ENCODE measurements at regions of chr20 and their contacts with region 1.

Region 1: GRCh38 chr20:35954200-35954906 is at the start of gene SCAND1:
- DNase-seq: peak; percentile 100
- H3K4me3 ChIP-seq: peak within 1 kb of the TSS; percentile 86
- H3K4me3 Mint-ChIP-seq: peak within 1 kb of the TSS; percentile 88
- H3K27ac Mint-ChIP-seq: peak within 1 kb of the TSS; percentile 96
- H3K4me1 ChIP-seq: peaks cover 22% of the 10 kb centered on the region
- H3K4me1 Mint-ChIP-seq: peaks cover 9% of the 10 kb centered on the region
- H3K27me3 ChIP-seq: no peaks in the 10 kb centered on the region
- H3K27me3 Mint-ChIP-seq: no peaks in the 10 kb centered on the region
- CTCF ChIP-seq: peak; percentile 99 to 100
- total RNA-seq, gene SCAND1: 125 and 129 TPM in 2 replicates

Region 2: GRCh38 chr20:35454881-35455609 is 499.3 kb before region 1 on chr20 and contains the start of gene CEP250:
- CTCF ChIA-PET with region 1: interaction called, 8 read pairs
- POLR2A ChIA-PET with region 1: interaction called, 27 read pairs
- intact Hi-C with region 1: loop called (anchors 10 kb)
- DNase-seq: peak; percentile 100
- H3K4me3 ChIP-seq: peak within 1 kb of the TSS; percentile 50
- H3K4me3 Mint-ChIP-seq: peak within 1 kb of the TSS; percentile 93
- H3K27ac Mint-ChIP-seq: peak within 1 kb of the TSS; percentile 100
- H3K4me1 ChIP-seq: peaks cover 5% of the 10 kb centered on the region
- H3K4me1 Mint-ChIP-seq: peaks cover 29% of the 10 kb centered on the region
- H3K27me3 ChIP-seq: no peaks in the 10 kb centered on the region
- H3K27me3 Mint-ChIP-seq: no peaks in the 10 kb centered on the region
- CTCF ChIP-seq: no peak
- total RNA-seq, gene CEP250: 117 and 137 TPM in 2 replicates

Region 3: DNA sequence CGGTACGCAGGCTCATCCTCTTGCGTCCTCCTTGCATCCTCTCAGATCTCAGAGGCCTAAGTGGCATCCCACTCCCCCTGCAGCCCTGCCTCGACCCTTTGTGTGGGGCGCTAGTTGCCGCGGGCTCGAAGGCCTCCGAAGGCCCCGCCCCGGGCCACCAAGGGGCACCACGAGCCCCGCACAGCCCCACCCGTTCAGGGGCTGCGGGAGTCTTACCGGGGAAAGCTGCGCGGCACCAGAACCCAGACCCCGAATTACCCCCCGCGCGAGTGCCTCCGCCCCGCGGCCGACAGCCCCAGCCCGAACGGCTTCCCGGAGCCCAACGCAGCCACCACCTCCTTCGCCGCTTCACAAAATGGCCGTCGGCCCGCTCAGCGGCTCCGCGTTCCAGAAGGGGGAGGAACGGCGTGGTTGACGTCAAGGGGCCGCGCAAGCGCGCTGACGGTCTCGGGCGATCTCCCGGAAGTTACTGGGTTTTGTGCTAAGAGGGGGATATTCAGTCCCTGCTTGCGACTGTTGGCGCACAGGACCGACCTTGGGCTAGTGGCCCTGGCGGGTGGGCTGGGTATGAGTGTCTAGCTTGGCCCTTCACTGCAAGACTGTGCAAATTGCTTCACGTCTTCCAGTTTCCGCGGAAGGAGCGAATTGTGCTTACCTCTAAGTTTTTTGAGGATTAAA is 289.7 kb before region 1 on chr20 and contains the starts of genes CPNE1 and RBM12:
- CTCF ChIA-PET with region 1: interaction called, 5 read pairs
- POLR2A ChIA-PET with region 1: interaction called, 13 read pairs
- intact Hi-C with region 1: no loop called
- DNase-seq: peak; percentile 99
- H3K4me3 ChIP-seq: peak within 1 kb of the TSS; percentile 87
- H3K4me3 Mint-ChIP-seq: peak within 1 kb of the TSS; percentile 84
- H3K27ac Mint-ChIP-seq: peak within 1 kb of the TSS; percentile 96
- H3K4me1 ChIP-seq: peaks cover 30% of the 10 kb centered on the region
- H3K4me1 Mint-ChIP-seq: peaks cover 22% of the 10 kb centered on the region
- H3K27me3 ChIP-seq: no peaks in the 10 kb centered on the region
- H3K27me3 Mint-ChIP-seq: no peaks in the 10 kb centered on the region
- CTCF ChIP-seq: no peak
- total RNA-seq, gene CPNE1: 815 and 833 TPM in 2 replicates
- total RNA-seq, gene RBM12: 146 and 147 TPM in 2 replicates

Region 4: DNA sequence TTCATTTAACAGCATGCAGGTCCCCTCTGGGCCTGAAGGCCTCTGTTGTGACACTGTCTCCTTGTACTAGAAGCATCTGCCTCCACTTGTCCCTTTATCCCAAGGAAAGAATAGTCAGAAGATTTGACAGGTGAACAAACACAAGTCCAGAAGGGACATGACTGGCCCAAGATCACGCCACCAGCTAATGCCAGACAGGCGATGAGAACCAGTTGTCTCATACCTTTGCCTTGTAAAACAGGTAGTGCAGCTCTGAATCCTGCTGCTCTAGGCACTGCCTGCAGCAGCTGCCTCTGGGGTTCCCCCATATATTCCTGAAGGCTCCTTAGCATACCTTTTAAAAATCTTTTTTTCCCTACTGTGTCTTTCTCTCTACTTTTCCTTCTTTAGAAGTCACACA is 25.1 kb before region 1 on chr20:
- CTCF ChIA-PET with region 1: interaction called, 11 read pairs
- POLR2A ChIA-PET with region 1: interaction called, 4 read pairs
- intact Hi-C with region 1: no loop called
- DNase-seq: no peak
- H3K4me3 ChIP-seq: no peak overlapping the region
- H3K4me3 Mint-ChIP-seq: no peak overlapping the region
- H3K27ac Mint-ChIP-seq: no peak overlapping the region
- H3K4me1 ChIP-seq: no peaks in the 10 kb centered on the region
- H3K4me1 Mint-ChIP-seq: no peaks in the 10 kb centered on the region
- H3K27me3 ChIP-seq: no peaks in the 10 kb centered on the region
- H3K27me3 Mint-ChIP-seq: no peaks in the 10 kb centered on the region
- CTCF ChIP-seq: no peak

Region 5: DNA sequence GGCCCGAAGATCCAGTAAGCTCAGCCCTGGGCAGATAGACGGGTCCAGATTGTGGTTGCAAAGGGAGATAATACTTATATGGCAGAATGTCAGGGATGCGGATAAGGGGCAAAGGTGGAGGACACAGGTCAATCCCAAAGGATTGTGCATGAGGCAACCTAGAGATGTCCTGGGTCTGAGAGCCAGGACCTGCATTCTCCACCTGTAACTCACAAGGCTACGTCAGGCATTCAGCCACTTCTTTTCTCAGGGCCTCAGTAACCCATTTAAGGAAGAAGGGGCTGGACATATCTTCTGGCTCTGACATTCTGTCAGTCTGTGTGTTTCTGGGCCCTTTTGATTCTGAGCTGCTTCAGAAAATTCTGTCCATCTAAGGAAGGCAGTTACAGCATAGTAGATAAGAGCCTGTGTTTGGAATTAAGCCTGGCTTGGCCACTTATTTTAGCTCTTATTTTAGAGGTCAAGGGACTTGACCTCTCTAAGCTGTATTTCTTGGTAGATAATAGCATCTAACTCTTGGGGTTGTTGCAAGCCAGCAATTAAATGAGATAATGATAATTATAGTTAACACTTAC is 54.2 kb after region 1 on chr20:
- CTCF ChIA-PET with region 1: no interaction called
- POLR2A ChIA-PET with region 1: no interaction called
- intact Hi-C with region 1: no loop called
- DNase-seq: peak in 1 of 2 experiments; percentile 37
- H3K4me3 ChIP-seq: no peak overlapping the region
- H3K4me3 Mint-ChIP-seq: no peak overlapping the region
- H3K27ac Mint-ChIP-seq: no peak overlapping the region
- H3K4me1 ChIP-seq: no peaks in the 10 kb centered on the region; the same call in 1 of the 2 replicates
- H3K4me1 Mint-ChIP-seq: no peaks in the 10 kb centered on the region
- H3K27me3 ChIP-seq: no peaks in the 10 kb centered on the region
- H3K27me3 Mint-ChIP-seq: no peaks in the 10 kb centered on the region
- CTCF ChIP-seq: no peak

Region 6: DNA sequence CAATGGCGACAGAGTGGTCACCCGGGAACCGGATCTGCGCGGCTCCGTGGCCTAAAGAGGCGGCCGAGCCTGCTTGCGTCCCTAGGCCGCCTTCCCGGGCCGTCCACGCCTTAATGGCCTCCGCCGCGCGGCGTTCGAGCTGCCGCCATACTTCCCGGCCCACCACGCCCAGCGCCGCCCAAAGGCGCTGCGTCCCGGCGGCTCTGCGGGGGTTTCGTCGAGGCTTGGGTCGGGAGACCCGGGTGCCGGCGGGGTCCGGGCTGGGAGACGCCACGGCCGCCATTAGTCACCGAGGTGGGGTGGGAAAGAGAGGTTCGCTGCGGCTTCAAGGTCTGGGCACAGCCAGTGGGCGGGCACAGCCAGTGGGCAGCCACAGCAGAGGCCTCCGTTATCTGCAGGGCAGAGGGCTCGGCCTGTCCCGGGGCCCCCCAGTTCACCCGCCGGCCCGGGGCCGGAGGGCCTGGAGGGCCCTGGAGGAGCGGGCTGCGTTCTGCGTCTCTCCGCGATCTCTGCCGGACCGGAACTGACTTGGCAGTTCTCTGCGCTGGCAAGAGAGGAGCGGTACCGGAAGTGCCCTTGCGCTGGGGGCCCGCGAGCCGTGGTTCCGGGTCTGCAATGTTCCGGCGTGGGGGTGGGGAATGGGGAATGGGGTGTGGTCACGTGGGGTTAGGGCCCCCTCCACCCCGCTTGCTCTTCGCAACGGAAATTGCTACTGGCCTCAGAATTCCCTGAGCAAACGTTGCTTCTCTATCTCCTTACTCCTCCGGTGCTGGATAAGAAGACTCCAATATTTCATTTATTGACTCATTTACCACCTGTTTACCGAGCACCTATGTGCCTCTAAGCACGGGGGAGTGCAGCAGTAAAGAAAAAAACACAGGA is 96.3 kb after region 1 on chr20:
- CTCF ChIA-PET with region 1: no interaction called
- POLR2A ChIA-PET with region 1: no interaction called
- intact Hi-C with region 1: loop called (anchors 5 kb)
- DNase-seq: peak; percentile 99
- H3K4me3 ChIP-seq: peak overlapping the region; percentile 67
- H3K4me3 Mint-ChIP-seq: peak overlapping the region; percentile 69
- H3K27ac Mint-ChIP-seq: peak overlapping the region; percentile 88
- H3K4me1 ChIP-seq: peaks cover 34% of the 10 kb centered on the region
- H3K4me1 Mint-ChIP-seq: peaks cover 44% of the 10 kb centered on the region
- H3K27me3 ChIP-seq: no peaks in the 10 kb centered on the region
- H3K27me3 Mint-ChIP-seq: no peaks in the 10 kb centered on the region
- CTCF ChIP-seq: no peak

Region 7: DNA sequence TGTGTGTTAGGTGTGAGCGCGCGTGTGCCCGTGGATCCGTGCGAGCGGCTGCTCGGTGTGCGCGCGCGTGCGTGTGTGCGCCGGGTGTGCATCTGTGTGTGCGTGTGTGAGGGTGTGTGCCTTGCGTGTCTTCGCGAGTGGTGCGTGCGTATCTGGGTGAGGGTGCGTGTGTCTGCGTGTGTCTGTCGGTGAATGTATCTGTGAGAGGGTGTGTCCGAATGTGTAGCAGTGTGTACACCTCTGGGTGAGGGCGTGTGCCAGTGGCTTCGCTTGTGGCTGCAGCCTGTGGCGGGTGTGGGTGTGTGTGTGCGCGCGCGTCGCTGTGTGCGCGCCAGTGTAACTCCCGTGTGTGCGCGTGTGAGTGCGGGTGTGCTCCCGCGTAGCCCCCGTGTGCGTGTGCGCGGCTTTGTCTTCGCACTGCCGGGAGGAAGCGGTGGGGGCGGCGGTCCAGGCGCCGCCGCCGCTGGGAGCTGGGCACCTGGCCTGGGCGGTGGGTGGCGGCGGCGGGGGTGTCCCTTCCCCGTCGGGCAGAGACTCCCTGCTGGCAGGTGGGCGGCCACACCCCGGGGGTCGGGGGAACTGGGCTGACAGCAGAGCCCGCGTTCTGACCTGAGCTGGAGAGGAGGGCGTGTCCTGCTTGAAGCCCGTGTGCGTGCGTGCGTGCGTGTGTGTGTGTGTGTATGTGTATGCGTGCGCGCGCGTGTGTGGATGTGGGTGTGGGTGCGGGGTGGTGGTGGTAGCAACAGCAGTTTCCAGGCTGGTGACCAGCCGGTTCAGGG is 138.9 kb after region 1 on chr20:
- CTCF ChIA-PET with region 1: interaction called, 6 read pairs
- POLR2A ChIA-PET with region 1: interaction called, 4 read pairs
- intact Hi-C with region 1: loop called (anchors 5 kb)
- DNase-seq: peak; percentile 77 to 83
- H3K4me3 ChIP-seq: peak overlapping the region; percentile 86
- H3K4me3 Mint-ChIP-seq: peak overlapping the region; percentile 93
- H3K27ac Mint-ChIP-seq: peak overlapping the region; percentile 82
- H3K4me1 ChIP-seq: peaks cover 60% of the 10 kb centered on the region
- H3K4me1 Mint-ChIP-seq: peaks cover 43% of the 10 kb centered on the region
- H3K27me3 ChIP-seq: no peaks in the 10 kb centered on the region
- H3K27me3 Mint-ChIP-seq: no peaks in the 10 kb centered on the region
- CTCF ChIP-seq: no peak

Region 8: GRCh38 chr20:36235892-36236785 is 281.8 kb after region 1 on chr20 and contains the start of gene AAR2:
- CTCF ChIA-PET with region 1: no interaction called
- POLR2A ChIA-PET with region 1: interaction called, 13 read pairs
- intact Hi-C with region 1: no loop called
- DNase-seq: peak; percentile 91 to 93
- H3K4me3 ChIP-seq: peak within 1 kb of the TSS; percentile 60
- H3K4me3 Mint-ChIP-seq: peak within 1 kb of the TSS; percentile 82
- H3K27ac Mint-ChIP-seq: peak within 1 kb of the TSS; percentile 92
- H3K4me1 ChIP-seq: 0 out of 2 replicates have a peak, but pooled peaks cover 4% of the 10 kb centered on the region
- H3K4me1 Mint-ChIP-seq: peaks cover 16% of the 10 kb centered on the region
- H3K27me3 ChIP-seq: no peaks in the 10 kb centered on the region
- H3K27me3 Mint-ChIP-seq: no peaks in the 10 kb centered on the region
- CTCF ChIP-seq: no peak
- total RNA-seq, gene AAR2: 59.1 and 60.0 TPM in 2 replicates

Measured in Caco-2 (cell line).